Breast epithelium (tissue), 4 donors: ENCODE measurements at regions of chr16 and their contacts with region 1.

Region 1: GRCh38 chr16:16109453-16110108 is 113.7 kb downstream of the ABCC6 start:
- DNase-seq: no peak
- H3K4me3 ChIP-seq: no peak overlapping the region
- H3K27ac ChIP-seq: no peak overlapping the region
- H3K4me1 ChIP-seq: no peaks in the 10 kb centered on the region
- H3K27me3 ChIP-seq: no peaks in the 10 kb centered on the region
- CTCF ChIP-seq: no peak
- POLR2A ChIP-seq: no peak

Region 2: GRCh38 chr16:16033208-16033717 is 76.3 kb before region 1 on chr16:
- intact Hi-C with region 1: loop called (anchors 2 kb)
- DNase-seq: no peak
- H3K4me3 ChIP-seq: no peak overlapping the region
- H3K27ac ChIP-seq: no peak overlapping the region
- H3K4me1 ChIP-seq: peaks cover 0 to 4% of the 10 kb centered on the region in 2 donors
- H3K27me3 ChIP-seq: no peaks in the 10 kb centered on the region
- CTCF ChIP-seq: no peak
- POLR2A ChIP-seq: no peak